Thyroid gland (tissue), 4 donors: ENCODE measurements at regions of chr14 and their contacts with region 1.

Region 1: GRCh38 chr14:35416108-35416750 is 11.7 kb upstream of the NFKBIA start:
- DNase-seq: no peak
- H3K4me3 ChIP-seq: no peak overlapping the region
- H3K27ac ChIP-seq: no peak overlapping the region
- H3K4me1 ChIP-seq: no peaks in the 10 kb centered on the region
- H3K27me3 ChIP-seq: no peaks in the 10 kb centered on the region
- CTCF ChIP-seq: no peak
- POLR2A ChIP-seq: no peak

Region 2: GRCh38 chr14:34875031-34875922 is 541.0 kb before region 1 on chr14 and contains the start of gene BAZ1A:
- intact Hi-C with region 1: loop called (anchors 10 kb)
- DNase-seq: peak; percentile 73 to 74
- H3K4me3 ChIP-seq: peak within 1 kb of the TSS; percentile 81 to 96 (median 89)
- H3K27ac ChIP-seq: peak within 1 kb of the TSS; percentile 96 to 100 (median 99)
- H3K4me1 ChIP-seq: peaks cover 8 to 10% of the 10 kb centered on the region in 2 donors
- H3K27me3 ChIP-seq: no peaks in the 10 kb centered on the region
- CTCF ChIP-seq: peak in 3 of 6 experiments; percentile 18 to 28 (median 27)
- POLR2A ChIP-seq: peak; percentile 27 to 96
- total RNA-seq, gene BAZ1A: 16.7 to 29.8 (median 28.4) TPM

Region 3: GRCh38 chr14:35140718-35141581 is 275.3 kb before region 1 on chr14:
- intact Hi-C with region 1: loop called (anchors 2 kb)
- DNase-seq: no peak
- H3K4me3 ChIP-seq: no peak overlapping the region
- H3K27ac ChIP-seq: no peak overlapping the region
- H3K4me1 ChIP-seq: no peaks in the 10 kb centered on the region
- H3K27me3 ChIP-seq: no peaks in the 10 kb centered on the region
- CTCF ChIP-seq: peak in 3 of 6 experiments; percentile 22 to 43 (median 26)
- POLR2A ChIP-seq: no peak

Region 4: GRCh38 chr14:35213869-35214387 is 202.3 kb before region 1 on chr14:
- intact Hi-C with region 1: loop called (anchors 5 kb)
- DNase-seq: no peak
- H3K4me3 ChIP-seq: no peak overlapping the region
- H3K27ac ChIP-seq: no peak overlapping the region
- H3K4me1 ChIP-seq: peaks cover 0 to 15% of the 10 kb centered on the region in 2 donors
- H3K27me3 ChIP-seq: no peaks in the 10 kb centered on the region
- CTCF ChIP-seq: no peak
- POLR2A ChIP-seq: no peak

Region 5: DNA sequence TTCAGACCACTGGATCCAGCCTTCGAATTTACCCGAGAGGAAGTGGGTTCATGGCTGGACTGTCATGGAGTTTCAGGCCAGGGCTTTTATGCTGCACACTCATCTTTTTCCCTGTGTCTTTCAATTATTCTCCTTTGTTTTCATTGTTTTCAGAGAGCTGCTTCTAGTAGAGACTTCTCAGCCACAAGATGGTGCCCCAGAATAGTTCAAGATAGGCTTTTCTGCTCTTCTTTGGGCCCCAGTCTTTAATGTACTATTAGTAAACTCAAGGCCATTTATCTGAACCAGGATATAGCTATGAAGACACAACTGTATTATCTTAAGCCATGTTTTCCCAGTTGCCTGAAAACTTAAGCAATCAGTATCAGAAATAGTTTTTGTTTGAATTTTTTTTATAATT is 154.5 kb before region 1 on chr14:
- intact Hi-C with region 1: no loop called
- DNase-seq: peak in 1 of 2 donors; percentile 3
- H3K4me3 ChIP-seq: no peak overlapping the region
- H3K27ac ChIP-seq: no peak overlapping the region
- H3K4me1 ChIP-seq: no peaks in the 10 kb centered on the region
- H3K27me3 ChIP-seq: no peaks in the 10 kb centered on the region
- CTCF ChIP-seq: peak in 4 of 6 experiments; percentile 13 to 44 (median 34)
- POLR2A ChIP-seq: no peak

Region 6: DNA sequence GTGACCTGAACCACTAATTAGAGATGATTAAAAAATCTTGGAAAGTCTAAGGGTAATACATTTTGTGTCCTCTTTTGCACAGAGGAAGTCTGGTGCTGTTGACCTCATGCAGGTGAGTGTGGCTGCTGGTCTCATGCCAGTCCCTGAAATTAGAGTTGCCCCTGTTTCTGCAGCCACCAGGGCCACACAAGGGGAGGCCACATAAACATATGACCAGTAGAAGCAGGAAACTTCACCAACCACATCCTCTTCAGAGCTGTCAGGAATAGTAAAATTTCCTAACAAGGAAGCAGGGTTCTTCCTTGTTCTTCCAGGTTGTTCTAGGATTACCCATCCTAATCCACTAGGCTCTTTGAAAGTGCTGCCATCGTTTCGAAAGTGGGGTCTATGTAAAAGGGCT is 95.8 kb before region 1 on chr14:
- intact Hi-C with region 1: no loop called
- DNase-seq: no peak
- H3K4me3 ChIP-seq: no peak overlapping the region
- H3K27ac ChIP-seq: no peak overlapping the region
- H3K4me1 ChIP-seq: no peaks in the 10 kb centered on the region
- H3K27me3 ChIP-seq: no peaks in the 10 kb centered on the region
- CTCF ChIP-seq: no peak
- POLR2A ChIP-seq: no peak

Region 7: GRCh38 chr14:35355981-35356841 is 60.0 kb before region 1 on chr14:
- intact Hi-C with region 1: no loop called
- DNase-seq: peak; percentile 75 to 83
- H3K4me3 ChIP-seq: no peak overlapping the region
- H3K27ac ChIP-seq: peak overlapping the region; percentile 66 to 81 (median 81)
- H3K4me1 ChIP-seq: peaks cover 28 to 36% of the 10 kb centered on the region in 2 donors
- H3K27me3 ChIP-seq: no peaks in the 10 kb centered on the region
- CTCF ChIP-seq: no peak
- POLR2A ChIP-seq: peak in 1 of 2 donors; percentile 29

Region 8: GRCh38 chr14:35789651-35790050 is 373.4 kb after region 1 on chr14:
- intact Hi-C with region 1: no loop called
- DNase-seq: no peak
- H3K4me3 ChIP-seq: no peak overlapping the region
- H3K27ac ChIP-seq: no peak overlapping the region
- H3K4me1 ChIP-seq: peaks cover 0 to 3% of the 10 kb centered on the region in 2 donors
- H3K27me3 ChIP-seq: no peaks in the 10 kb centered on the region
- CTCF ChIP-seq: no peak
- POLR2A ChIP-seq: no peak